WTC11 (cell line): ENCODE measurements at regions of chr1 and their contacts with region 1.

Region 1: GRCh38 chr1:175075572-175076568 is 8.2 kb downstream of the TNN start:
- DNase-seq: no peak
- ATAC-seq: peak; percentile 5; the same call in 1 of the 2 replicates
- H3K4me3 Mint-ChIP-seq: no peak overlapping the region
- H3K27ac Mint-ChIP-seq: no peak overlapping the region
- H3K4me1 Mint-ChIP-seq: peaks cover 35% of the 10 kb centered on the region
- H3K27me3 Mint-ChIP-seq: peaks cover 13% of the 10 kb centered on the region
- CTCF ChIP-seq: no peak

Region 2: DNA sequence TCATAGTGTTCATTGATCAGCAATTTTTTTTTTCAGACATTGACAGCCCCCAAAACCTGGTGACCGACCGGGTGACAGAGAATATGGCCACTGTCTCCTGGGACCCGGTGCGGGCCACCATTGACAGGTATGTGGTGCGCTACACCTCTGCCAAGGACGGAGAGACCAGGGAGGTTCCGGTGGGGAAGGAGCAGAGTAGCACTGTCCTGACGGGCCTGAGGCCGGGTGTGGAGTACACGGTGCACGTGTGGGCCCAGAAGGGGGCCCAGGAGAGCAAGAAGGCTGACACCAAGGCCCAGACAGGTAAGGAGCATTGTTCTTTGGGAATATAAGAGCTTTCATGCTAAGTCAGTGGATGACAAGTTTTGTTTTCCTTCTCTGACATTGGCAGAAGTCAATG is 41.0 kb after region 1 on chr1:
- CTCF ChIA-PET with region 1: interaction called, 10 read pairs
- POLR2A ChIA-PET with region 1: no interaction called
- DNase-seq: no peak
- ATAC-seq: peak; percentile 85
- H3K4me3 Mint-ChIP-seq: no peak overlapping the region
- H3K27ac Mint-ChIP-seq: no peak overlapping the region
- H3K4me1 Mint-ChIP-seq: no peaks in the 10 kb centered on the region
- H3K27me3 Mint-ChIP-seq: no peaks in the 10 kb centered on the region; the same call in 1 of the 2 replicates
- CTCF ChIP-seq: no peak